PC-3 (cell line): ENCODE measurements at regions of chr6 and their contacts with region 1.

Region 1: GRCh38 chr6:49333345-49334125 is 129.5 kb downstream of the MMUT start:
- DNase-seq: peak; percentile 75
- ATAC-seq: peak; percentile 93
- H3K4me3 ChIP-seq: no peak overlapping the region
- H3K27ac ChIP-seq: peak overlapping the region; percentile 66
- H3K4me1 ChIP-seq: 0 out of 2 replicates have a peak, but pooled peaks cover 4% of the 10 kb centered on the region
- H3K27me3 ChIP-seq: no peaks in the 10 kb centered on the region
- CTCF ChIP-seq: no peak

Region 2: DNA sequence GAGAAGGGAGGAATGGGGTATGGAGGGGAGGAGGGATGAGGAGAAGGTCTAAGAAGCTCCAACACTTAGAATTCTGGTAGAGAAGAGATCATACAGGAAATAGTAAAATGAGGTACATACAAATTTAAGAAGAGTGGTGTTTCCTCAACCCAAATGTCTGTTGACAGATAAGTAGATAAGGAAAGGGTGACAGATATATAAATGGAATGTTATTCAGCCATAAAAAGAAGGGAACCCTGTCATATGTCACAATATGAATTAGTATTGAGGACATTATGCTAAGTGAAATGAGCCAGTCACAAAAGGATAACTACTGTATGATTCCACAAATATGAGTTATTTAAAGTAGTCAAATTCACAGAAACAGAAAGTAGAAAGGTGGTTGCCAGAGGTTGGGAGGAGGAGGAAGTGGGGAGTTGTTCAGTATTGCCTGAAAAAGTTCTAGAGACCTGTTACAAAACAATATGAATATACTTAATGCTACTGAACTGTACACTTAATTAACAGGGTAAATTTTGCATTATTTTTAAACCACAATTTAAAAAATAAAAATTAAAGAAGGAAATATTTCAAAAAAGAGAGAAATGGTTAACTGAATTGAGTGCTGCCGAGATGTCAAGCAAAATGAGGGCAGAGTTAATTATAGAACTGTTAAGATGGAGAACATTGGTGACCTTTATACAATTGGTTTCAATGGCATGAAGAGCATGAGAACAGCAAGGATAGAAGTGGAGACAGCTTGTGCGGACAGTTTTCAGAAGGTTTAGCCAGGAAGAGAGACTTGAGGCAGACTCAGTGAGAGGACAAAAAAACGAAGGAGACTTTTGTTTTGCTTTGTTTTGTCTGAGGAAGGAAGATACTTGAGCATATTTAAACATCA is 1682.7 kb before region 1 on chr6:
- CTCF ChIA-PET with region 1: no interaction called
- POLR2A ChIA-PET with region 1: no interaction called
- intact Hi-C with region 1: no loop called
- DNase-seq: peak; percentile 21
- ATAC-seq: no peak
- H3K4me3 ChIP-seq: no peak overlapping the region
- H3K27ac ChIP-seq: peak overlapping the region; percentile 66
- H3K4me1 ChIP-seq: peaks cover 40% of the 10 kb centered on the region
- H3K27me3 ChIP-seq: no peaks in the 10 kb centered on the region
- CTCF ChIP-seq: no peak

Region 3: GRCh38 chr6:49300443-49300842 is 33.1 kb before region 1 on chr6:
- CTCF ChIA-PET with region 1: no interaction called
- POLR2A ChIA-PET with region 1: no interaction called
- intact Hi-C with region 1: loop called (anchors 1 kb)
- DNase-seq: peak; percentile 60
- ATAC-seq: peak; percentile 87
- H3K4me3 ChIP-seq: no peak overlapping the region
- H3K27ac ChIP-seq: peak overlapping the region; percentile 51
- H3K4me1 ChIP-seq: peaks cover 18% of the 10 kb centered on the region
- H3K27me3 ChIP-seq: no peaks in the 10 kb centered on the region
- CTCF ChIP-seq: no peak